HepG2 (cell line): ENCODE measurements at regions of chr13 and their contacts with region 1.

Region 1: DNA sequence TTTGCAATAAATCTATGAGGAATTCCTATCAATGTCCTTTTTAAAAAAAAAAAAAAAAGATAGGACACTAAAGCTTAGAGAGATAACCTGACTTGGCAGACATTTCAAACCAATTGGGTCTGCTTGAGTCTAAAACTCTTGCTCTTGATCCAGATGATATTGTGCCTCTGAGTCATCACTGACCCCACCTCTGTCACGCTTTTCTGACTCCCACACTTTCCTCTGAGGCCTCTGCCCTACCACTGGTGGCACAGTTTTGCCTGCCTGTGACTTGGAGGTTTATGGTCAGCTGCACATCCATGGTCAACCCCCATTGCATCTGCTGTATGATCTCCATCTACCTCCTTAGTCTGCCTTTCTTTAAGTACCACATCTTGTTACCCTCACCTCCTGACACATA is 328.7 kb downstream of the SPRY2 start:
- DNase-seq: no peak
- ATAC-seq: no peak
- H3K4me3 ChIP-seq: no peak overlapping the region
- H3K27ac ChIP-seq: no peak overlapping the region
- H3K4me1 ChIP-seq: no peaks in the 10 kb centered on the region
- H3K27me3 ChIP-seq: no peaks in the 10 kb centered on the region
- CTCF ChIP-seq: no peak
- EP300 ChIP-seq: no peak
- POLR2A ChIP-seq: no peak
- RAD21 ChIP-seq: no peak

Region 2: GRCh38 chr13:79972066-79972569 is 40.1 kb before region 1 on chr13:
- CTCF ChIA-PET with region 1: no interaction called
- POLR2A ChIA-PET with region 1: no interaction called
- in situ Hi-C with region 1: no loop called
- intact Hi-C with region 1: loop called (anchors 1 kb)
- DNase-seq: no peak
- ATAC-seq: no peak
- H3K4me3 ChIP-seq: no peak overlapping the region
- H3K27ac ChIP-seq: no peak overlapping the region
- H3K4me1 ChIP-seq: no peaks in the 10 kb centered on the region
- H3K27me3 ChIP-seq: no peaks in the 10 kb centered on the region
- CTCF ChIP-seq: no peak
- EP300 ChIP-seq: no peak
- POLR2A ChIP-seq: no peak
- RAD21 ChIP-seq: no peak